Naive thymus-derived CD4-positive, alpha-beta T cell (primary cell): ENCODE measurements at regions of chr16 and their contacts with region 1.

Region 1: DNA sequence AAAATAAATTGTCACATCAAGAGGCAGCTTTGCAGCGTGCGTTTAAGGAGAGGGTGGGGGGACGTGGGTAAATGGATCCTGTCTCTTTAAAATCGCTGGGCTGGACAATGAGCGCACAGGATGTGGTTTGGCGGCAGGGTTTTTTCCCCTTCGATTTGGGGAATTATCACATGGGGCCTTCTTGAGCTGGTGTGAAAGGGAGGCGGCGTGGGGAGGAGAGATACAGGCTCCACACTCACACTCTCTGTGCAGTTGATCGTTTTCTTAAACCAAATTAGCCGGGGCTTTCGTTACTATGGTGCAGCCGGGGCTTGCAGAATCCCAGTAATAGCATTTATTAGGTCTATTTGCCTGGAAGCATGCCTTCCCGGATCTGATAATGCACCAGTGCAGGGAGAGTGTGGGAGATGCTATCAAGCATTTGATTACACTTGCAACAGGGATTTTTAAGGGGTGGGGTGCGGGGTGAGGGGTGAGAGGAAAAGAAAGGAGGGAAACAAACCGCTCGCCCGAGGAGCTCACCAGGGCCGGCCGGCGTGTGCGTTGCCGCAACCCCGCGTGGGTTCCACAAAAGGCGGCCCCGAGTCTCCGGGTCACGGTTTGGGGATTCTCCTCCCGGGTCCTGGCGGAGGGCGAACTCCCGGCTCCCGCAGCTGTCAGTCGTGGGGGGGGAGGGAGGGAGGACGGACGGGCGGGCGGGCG is 58.9 kb upstream of the GSE1 start:
- DNase-seq: peak in 8 of 9 donors; percentile 28 to 78 (median 52)
- ATAC-seq: peak; percentile 76
- H3K4me3 ChIP-seq: peak overlapping the region; percentile 88
- H3K4me3 Mint-ChIP-seq: peak overlapping the region; percentile 86 to 98 (median 92)
- H3K27ac ChIP-seq: peak overlapping the region; percentile 83
- H3K27ac Mint-ChIP-seq: peak overlapping the region; percentile 72 to 97 (median 89)
- H3K4me1 ChIP-seq: peaks cover 13 to 27% of the 10 kb centered on the region in 2 donors
- H3K4me1 Mint-ChIP-seq: peaks cover 18 to 47% (median 28%) of the 10 kb centered on the region in 7 donors
- H3K27me3 ChIP-seq: no peaks in the 10 kb centered on the region
- H3K27me3 Mint-ChIP-seq: peaks cover 0 to 15% (median 0%) of the 10 kb centered on the region in 5 donors

Region 2: GRCh38 chr16:84116720-84117493 is 1437.4 kb before region 1 on chr16 and contains the start of gene MBTPS1:
- CTCF ChIA-PET with region 1: no interaction called
- POLR2A ChIA-PET with region 1: no interaction called
- intact Hi-C with region 1: loop called in 1 of 2 experiments (anchors 2 kb)
- DNase-seq: peak; percentile 94 to 99 (median 97)
- ATAC-seq: peak; percentile 92
- H3K4me3 ChIP-seq: peak within 1 kb of the TSS; percentile 99
- H3K4me3 Mint-ChIP-seq: peak within 1 kb of the TSS; percentile 90 to 96 (median 94)
- H3K27ac ChIP-seq: peak within 1 kb of the TSS; percentile 86
- H3K27ac Mint-ChIP-seq: peak within 1 kb of the TSS; percentile 93 to 98 (median 96)
- H3K4me1 ChIP-seq: peaks cover 14 to 18% of the 10 kb centered on the region in 2 donors
- H3K4me1 Mint-ChIP-seq: peaks cover 6 to 36% (median 23%) of the 10 kb centered on the region in 7 donors
- H3K27me3 ChIP-seq: no peaks in the 10 kb centered on the region
- H3K27me3 Mint-ChIP-seq: no peaks in the 10 kb centered on the region
- total RNA-seq, gene MBTPS1: 65.3 to 157 (median 138) TPM

Region 3: DNA sequence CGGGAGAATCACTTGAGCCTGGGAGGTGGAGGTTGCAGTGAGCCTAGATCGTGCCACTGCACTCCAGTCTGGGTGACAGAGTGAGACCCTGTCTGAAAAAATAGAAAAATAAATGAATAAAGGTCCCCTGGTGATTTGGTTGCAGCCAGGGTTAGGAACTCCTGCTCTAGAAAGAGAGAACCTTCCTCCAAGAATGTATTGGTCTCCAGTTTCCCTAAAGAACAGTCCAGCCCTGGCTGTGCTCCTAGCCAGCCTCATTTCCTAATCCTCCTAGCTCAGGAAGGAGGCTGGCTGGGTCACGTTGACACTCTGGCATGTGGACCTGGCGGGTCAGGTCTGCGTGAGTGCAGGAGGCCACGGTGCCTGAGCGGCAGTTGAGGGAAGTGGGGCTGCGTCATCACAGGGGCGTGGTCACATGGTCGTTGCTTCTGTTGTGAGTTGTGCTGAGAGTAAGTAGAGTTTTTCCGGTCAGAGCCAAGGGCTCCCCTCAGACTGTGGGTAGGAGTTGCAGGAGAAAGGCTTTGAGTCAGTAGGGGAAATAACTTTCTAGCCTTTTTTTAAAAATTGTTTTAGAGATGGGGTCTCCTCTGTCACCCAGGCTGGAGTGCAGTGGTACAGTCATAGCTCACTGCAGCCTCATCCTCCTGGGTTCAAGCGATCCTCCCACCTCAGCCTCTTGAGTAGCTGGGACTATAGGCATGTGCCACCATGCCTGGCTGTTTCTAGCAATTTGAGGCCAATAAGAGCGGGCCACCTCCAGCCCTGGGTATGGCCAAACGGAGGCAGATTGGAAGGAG is 248.1 kb before region 1 on chr16:
- CTCF ChIA-PET with region 1: interaction called, 3 read pairs
- POLR2A ChIA-PET with region 1: interaction called, 3 read pairs
- intact Hi-C with region 1: loop called (anchors 1 to 5 kb)
- DNase-seq: peak; percentile 61 to 87 (median 85)
- ATAC-seq: peak; percentile 88
- H3K4me3 ChIP-seq: no peak overlapping the region
- H3K4me3 Mint-ChIP-seq: peak overlapping the region; percentile 45 to 86 (median 61)
- H3K27ac ChIP-seq: peak overlapping the region; percentile 57
- H3K27ac Mint-ChIP-seq: peak overlapping the region; percentile 86 to 98 (median 94)
- H3K4me1 ChIP-seq: peaks cover 0 to 70% of the 10 kb centered on the region in 2 donors
- H3K4me1 Mint-ChIP-seq: peaks cover 20 to 74% (median 56%) of the 10 kb centered on the region in 7 donors
- H3K27me3 ChIP-seq: no peaks in the 10 kb centered on the region
- H3K27me3 Mint-ChIP-seq: no peaks in the 10 kb centered on the region

Region 4: DNA sequence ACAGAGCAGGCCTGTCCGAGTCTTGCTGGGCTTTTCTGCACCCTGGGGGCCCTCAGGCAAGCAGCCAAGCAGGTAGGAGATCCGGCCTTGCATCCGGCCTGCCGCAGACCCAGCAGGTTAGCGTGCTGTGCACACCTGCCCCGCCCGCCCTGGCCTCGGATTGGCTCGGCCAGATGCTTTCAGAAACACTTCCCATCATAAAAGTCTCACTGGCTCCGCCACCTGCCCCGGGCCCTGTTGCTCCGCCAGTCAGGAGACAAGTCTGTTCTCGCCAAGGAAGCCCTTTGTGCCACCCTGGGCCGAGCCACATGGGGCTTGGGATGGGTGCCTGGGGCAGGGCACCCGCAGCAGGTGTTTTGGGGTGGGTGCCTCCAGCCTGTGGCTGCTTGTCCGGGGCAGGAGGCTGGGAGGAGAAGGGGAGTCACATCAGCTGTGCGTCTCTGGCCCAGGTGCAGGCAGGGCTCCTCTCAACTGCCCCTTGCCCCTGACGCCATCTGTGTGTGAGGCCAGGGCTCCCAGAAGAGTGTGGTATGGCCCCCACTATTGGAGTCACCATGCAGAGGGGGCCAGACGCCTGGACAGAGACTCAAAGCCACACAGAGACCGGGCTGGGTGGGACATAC is 169.3 kb before region 1 on chr16:
- CTCF ChIA-PET with region 1: no interaction called
- POLR2A ChIA-PET with region 1: no interaction called
- intact Hi-C with region 1: no loop called
- DNase-seq: no peak
- ATAC-seq: no peak
- H3K4me3 ChIP-seq: no peak overlapping the region
- H3K4me3 Mint-ChIP-seq: no peak overlapping the region
- H3K27ac ChIP-seq: no peak overlapping the region
- H3K27ac Mint-ChIP-seq: no peak overlapping the region
- H3K4me1 ChIP-seq: no peaks in the 10 kb centered on the region
- H3K4me1 Mint-ChIP-seq: peaks cover 0 to 3% (median 0%) of the 10 kb centered on the region in 7 donors
- H3K27me3 ChIP-seq: no peaks in the 10 kb centered on the region
- H3K27me3 Mint-ChIP-seq: peaks cover 0 to 10% (median 5%) of the 10 kb centered on the region in 5 donors

Region 5: GRCh38 chr16:85528528-85529387 is 25.5 kb before region 1 on chr16:
- CTCF ChIA-PET with region 1: no interaction called
- POLR2A ChIA-PET with region 1: interaction called, 5 read pairs
- intact Hi-C with region 1: loop called in 1 of 2 experiments (anchors 2 kb)
- DNase-seq: peak in 2 of 9 donors; percentile 10 to 28
- ATAC-seq: peak; percentile 63
- H3K4me3 ChIP-seq: no peak overlapping the region
- H3K4me3 Mint-ChIP-seq: no peak overlapping the region
- H3K27ac ChIP-seq: no peak overlapping the region
- H3K27ac Mint-ChIP-seq: no peak overlapping the region
- H3K4me1 ChIP-seq: no peaks in the 10 kb centered on the region
- H3K4me1 Mint-ChIP-seq: no peaks in the 10 kb centered on the region
- H3K27me3 ChIP-seq: no peaks in the 10 kb centered on the region
- H3K27me3 Mint-ChIP-seq: no peaks in the 10 kb centered on the region

Region 6: GRCh38 chr16:85688586-85689284 is 134.5 kb after region 1 on chr16 and contains the start of gene GINS2:
- CTCF ChIA-PET with region 1: no interaction called
- POLR2A ChIA-PET with region 1: no interaction called
- intact Hi-C with region 1: loop called (anchors 2 to 5 kb)
- DNase-seq: peak; percentile 77 to 90 (median 89)
- ATAC-seq: peak; percentile 100
- H3K4me3 ChIP-seq: peak within 1 kb of the TSS; percentile 69
- H3K4me3 Mint-ChIP-seq: peak within 1 kb of the TSS; percentile 64 to 85 (median 76)
- H3K27ac ChIP-seq: peak within 1 kb of the TSS; percentile 51
- H3K27ac Mint-ChIP-seq: peak within 1 kb of the TSS in 3 of 9 donors; percentile 46 to 63 (median 56)
- H3K4me1 ChIP-seq: peaks cover 5% of the 10 kb centered on the region in 2 donors
- H3K4me1 Mint-ChIP-seq: peaks cover under 1 to 21% (median 7%) of the 10 kb centered on the region in 7 donors
- H3K27me3 ChIP-seq: no peaks in the 10 kb centered on the region
- H3K27me3 Mint-ChIP-seq: peaks cover 0 to 8% (median 6%) of the 10 kb centered on the region in 5 donors
- total RNA-seq, gene GINS2: 1.0 to 43.6 (median 1.9) TPM

Region 7: GRCh38 chr16:87387942-87388817 is 1833.9 kb after region 1 on chr16:
- CTCF ChIA-PET with region 1: no interaction called
- POLR2A ChIA-PET with region 1: no interaction called
- intact Hi-C with region 1: loop called in 1 of 2 experiments (anchors 5 kb)
- DNase-seq: peak; percentile 46 to 95 (median 88)
- ATAC-seq: peak; percentile 75
- H3K4me3 ChIP-seq: peak overlapping the region; percentile 27
- H3K4me3 Mint-ChIP-seq: peak overlapping the region; percentile 27 to 78 (median 68)
- H3K27ac ChIP-seq: peak overlapping the region; percentile 86
- H3K27ac Mint-ChIP-seq: peak overlapping the region; percentile 87 to 99 (median 96)
- H3K4me1 ChIP-seq: peaks cover 17 to 29% of the 10 kb centered on the region in 2 donors
- H3K4me1 Mint-ChIP-seq: peaks cover 15 to 55% (median 44%) of the 10 kb centered on the region in 7 donors
- H3K27me3 ChIP-seq: no peaks in the 10 kb centered on the region
- H3K27me3 Mint-ChIP-seq: peaks cover 0 to 2% (median 0%) of the 10 kb centered on the region in 5 donors